ENCODE measurements at regions of chr5 and their contacts with region 1.

Region 1: GRCh38 chr5:139458580-139459406 is 3.8 kb downstream of the ECSCR start:
- DNase-seq: peak; percentile 59
- ATAC-seq: peak; percentile 89
- H3K4me3 ChIP-seq: no peak overlapping the region
- H3K27ac ChIP-seq: no peak overlapping the region
- H3K4me1 ChIP-seq: peaks cover 6% of the 10 kb centered on the region; the same call in 1 of the 2 replicates
- H3K27me3 ChIP-seq: no peaks in the 10 kb centered on the region
- CTCF ChIP-seq: no peak

Region 2: DNA sequence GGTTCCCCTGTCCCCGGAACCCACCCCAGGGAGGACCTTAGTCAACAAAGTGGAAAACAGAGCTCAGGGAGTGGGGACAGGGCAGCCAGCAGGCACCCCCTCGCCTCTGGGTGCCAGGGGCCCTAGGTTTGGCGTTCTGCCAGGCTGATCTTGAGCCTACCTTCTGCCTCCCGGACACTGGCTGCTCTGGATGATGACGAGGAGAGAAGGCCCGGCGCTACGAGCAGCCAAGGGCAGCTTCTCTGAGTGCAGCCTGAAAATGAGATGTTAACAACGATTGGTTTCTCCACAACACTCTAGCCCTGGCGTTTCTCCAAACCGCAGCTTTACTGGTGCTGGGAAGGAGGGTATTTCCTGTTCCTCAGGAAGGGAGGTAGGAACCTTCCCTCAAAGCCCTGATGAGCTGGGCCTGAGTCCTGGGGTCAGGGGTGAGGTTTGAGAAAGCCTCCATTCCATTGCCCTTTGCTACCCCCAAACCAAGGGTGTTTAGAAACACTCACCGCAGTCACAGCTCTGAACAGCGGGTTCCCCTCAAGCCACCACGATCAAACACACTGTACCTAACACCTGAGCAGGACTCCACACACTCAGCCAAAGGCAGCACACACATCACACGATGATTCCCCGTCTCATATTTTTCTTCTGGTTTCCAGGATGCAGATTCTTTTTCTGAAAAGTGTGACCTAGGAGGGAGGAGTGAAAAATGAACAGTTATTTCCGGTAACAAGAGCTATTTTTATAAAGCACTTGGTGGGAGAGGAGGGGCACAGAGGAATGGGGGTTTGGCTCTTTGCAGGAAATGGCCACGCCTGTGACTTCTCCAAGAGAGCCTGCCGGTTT is 23.5 kb after region 1 on chr5 and contains the start of gene STING1:
- CTCF ChIA-PET with region 1: no interaction called
- POLR2A ChIA-PET with region 1: interaction called, 15 read pairs
- intact Hi-C with region 1: no loop called
- DNase-seq: peak; percentile 97
- ATAC-seq: peak; percentile 89
- H3K4me3 ChIP-seq: peak within 1 kb of the TSS; percentile 53
- H3K27ac ChIP-seq: peak within 1 kb of the TSS; percentile 90
- H3K4me1 ChIP-seq: peaks cover 20% of the 10 kb centered on the region
- H3K27me3 ChIP-seq: no peaks in the 10 kb centered on the region
- CTCF ChIP-seq: no peak
- total RNA-seq, gene STING1: 6.5 and 12.6 TPM in 2 replicates